ENCODE measurements at regions of chr15 and their contacts with region 1.

Region 1: GRCh38 chr15:55535436-55535835 is 27.4 kb upstream of the DNAAF4 start:
- DNase-seq: no peak
- H3K4me3 ChIP-seq: no peak overlapping the region
- H3K27ac ChIP-seq: no peak overlapping the region
- H3K4me1 ChIP-seq: no peaks in the 10 kb centered on the region
- H3K27me3 ChIP-seq: no peaks in the 10 kb centered on the region
- CTCF ChIP-seq: no peak

Region 2: GRCh38 chr15:55468321-55468720 is 67.1 kb before region 1 on chr15:
- CTCF ChIA-PET with region 1: interaction called, 10 read pairs
- POLR2A ChIA-PET with region 1: no interaction called
- intact Hi-C with region 1: no loop called
- DNase-seq: no peak
- H3K4me3 ChIP-seq: no peak overlapping the region
- H3K27ac ChIP-seq: no peak overlapping the region
- H3K4me1 ChIP-seq: no peaks in the 10 kb centered on the region
- H3K27me3 ChIP-seq: no peaks in the 10 kb centered on the region
- CTCF ChIP-seq: no peak

Measured in PC-9 (cell line).